GM12878 (cell line): ENCODE measurements at regions of chr2 and their contacts with region 1.

Region 1: GRCh38 chr2:214809751-214810564 is 475 bp upstream of the BARD1 start:
- DNase-seq: peak; percentile 87
- ATAC-seq: peak; percentile 88
- H3K4me3 ChIP-seq: peak overlapping the region; percentile 81
- H3K27ac ChIP-seq: peak overlapping the region; percentile 72
- H3K4me1 ChIP-seq: 0 out of 2 replicates have a peak, but pooled peaks cover 5% of the 10 kb centered on the region
- H3K27me3 ChIP-seq: no peaks in the 10 kb centered on the region
- CTCF ChIP-seq: no peak
- EP300 ChIP-seq: no peak
- POLR2A ChIP-seq: peak; percentile 76
- RAD21 ChIP-seq: no peak

Region 2: DNA sequence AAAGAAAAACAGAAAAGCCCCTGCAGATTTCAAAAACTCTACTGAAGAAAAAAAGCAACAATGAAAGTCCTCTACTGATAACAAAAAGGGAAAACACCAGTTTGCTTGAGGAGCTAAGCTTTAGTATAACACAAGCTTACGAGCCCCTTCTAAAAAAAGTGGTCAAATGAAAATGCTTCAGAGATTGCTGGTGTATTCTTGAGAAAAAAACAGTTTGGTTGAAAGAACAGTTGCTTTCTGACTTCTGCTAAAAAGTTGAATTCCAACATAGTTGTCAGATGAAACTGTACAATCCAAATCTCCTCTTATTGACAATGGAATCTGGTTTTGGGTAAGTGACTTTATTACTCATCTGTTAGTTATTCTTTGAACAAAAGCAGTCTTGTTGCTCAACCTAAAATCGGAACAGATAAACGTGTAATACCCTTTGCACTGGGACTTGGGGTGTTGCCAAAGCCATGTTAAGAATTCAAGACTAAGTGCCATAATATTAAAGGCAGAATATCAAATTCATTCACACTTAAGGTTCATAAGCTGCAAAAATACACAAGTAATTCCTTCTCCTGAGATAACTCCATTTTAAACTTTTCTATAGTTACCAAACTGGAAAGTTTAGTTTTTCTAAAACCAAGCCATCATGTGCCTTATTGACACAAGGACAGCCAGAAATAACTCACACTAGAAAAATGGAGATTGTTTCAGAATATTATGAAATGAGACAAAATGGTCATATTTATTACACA is 1571.0 kb before region 1 on chr2:
- CTCF ChIA-PET with region 1: no interaction called
- POLR2A ChIA-PET with region 1: interaction called, 3 read pairs
- RAD21 ChIA-PET with region 1: interaction called, 4 read pairs
- SMC1A ChIA-PET with region 1: no interaction called
- in situ Hi-C with region 1: no loop called
- intact Hi-C with region 1: loop called (anchors 10 kb)
- DNase-seq: no peak
- ATAC-seq: peak; percentile 35
- H3K4me3 ChIP-seq: peak overlapping the region; percentile 58
- H3K27ac ChIP-seq: peak overlapping the region; percentile 98
- H3K4me1 ChIP-seq: peaks cover 47% of the 10 kb centered on the region
- H3K27me3 ChIP-seq: no peaks in the 10 kb centered on the region
- CTCF ChIP-seq: no peak
- EP300 ChIP-seq: peak; percentile 8 to 53; a peak in 1 of 4 replicates
- POLR2A ChIP-seq: no peak
- RAD21 ChIP-seq: no peak

Region 3: GRCh38 chr2:214730800-214731407 is 79.1 kb before region 1 on chr2:
- CTCF ChIA-PET with region 1: no interaction called
- POLR2A ChIA-PET with region 1: interaction called, 22 read pairs
- RAD21 ChIA-PET with region 1: interaction called, 59 read pairs
- SMC1A ChIA-PET with region 1: interaction called, 11 read pairs
- in situ Hi-C with region 1: no loop called
- intact Hi-C with region 1: loop called (anchors 2 kb)
- DNase-seq: peak; percentile 45
- ATAC-seq: peak; percentile 89
- H3K4me3 ChIP-seq: no peak overlapping the region
- H3K27ac ChIP-seq: no peak overlapping the region
- H3K4me1 ChIP-seq: no peaks in the 10 kb centered on the region
- H3K27me3 ChIP-seq: no peaks in the 10 kb centered on the region
- CTCF ChIP-seq: no peak
- EP300 ChIP-seq: no peak
- POLR2A ChIP-seq: no peak
- RAD21 ChIP-seq: no peak

Region 4: GRCh38 chr2:214747992-214748391 is 62.0 kb before region 1 on chr2:
- CTCF ChIA-PET with region 1: interaction called, 3 read pairs
- POLR2A ChIA-PET with region 1: interaction called, 18 read pairs
- RAD21 ChIA-PET with region 1: interaction called, 16 read pairs
- SMC1A ChIA-PET with region 1: interaction called, 41 read pairs
- in situ Hi-C with region 1: no loop called
- intact Hi-C with region 1: loop called (anchors 1 kb)
- DNase-seq: peak; percentile 40
- ATAC-seq: peak; percentile 78
- H3K4me3 ChIP-seq: no peak overlapping the region
- H3K27ac ChIP-seq: no peak overlapping the region
- H3K4me1 ChIP-seq: no peaks in the 10 kb centered on the region
- H3K27me3 ChIP-seq: no peaks in the 10 kb centered on the region
- CTCF ChIP-seq: no peak
- EP300 ChIP-seq: peak in 1 of 2 experiments; percentile 47; a peak in 1 of 4 replicates
- POLR2A ChIP-seq: no peak
- RAD21 ChIP-seq: no peak

Region 5: DNA sequence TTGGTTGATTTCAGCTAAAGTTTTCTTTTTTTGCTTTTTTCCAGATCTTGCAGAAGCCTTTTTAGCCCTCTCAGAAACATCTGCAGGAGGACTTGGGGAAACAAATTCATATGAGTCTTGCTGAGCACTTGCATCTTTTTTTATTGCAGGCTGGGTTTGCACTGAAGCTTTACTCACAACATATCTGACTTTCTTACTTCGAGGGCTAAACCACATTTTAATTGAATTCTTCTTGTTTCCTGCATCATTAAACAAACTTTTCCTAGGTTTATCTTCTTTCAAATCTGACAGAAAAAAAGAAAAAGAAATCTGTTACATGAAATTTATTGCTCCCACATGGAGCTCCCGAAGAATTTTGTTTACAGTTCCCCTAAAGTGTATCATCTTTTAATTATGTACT is 28.7 kb before region 1 on chr2:
- CTCF ChIA-PET with region 1: interaction called, 3 read pairs
- POLR2A ChIA-PET with region 1: interaction called, 4 read pairs
- RAD21 ChIA-PET with region 1: no interaction called
- SMC1A ChIA-PET with region 1: interaction called, 11 read pairs
- in situ Hi-C with region 1: no loop called
- intact Hi-C with region 1: no loop called
- DNase-seq: no peak
- ATAC-seq: no peak
- H3K4me3 ChIP-seq: no peak overlapping the region
- H3K27ac ChIP-seq: no peak overlapping the region
- H3K4me1 ChIP-seq: no peaks in the 10 kb centered on the region
- H3K27me3 ChIP-seq: no peaks in the 10 kb centered on the region
- CTCF ChIP-seq: no peak
- EP300 ChIP-seq: no peak
- POLR2A ChIP-seq: no peak
- RAD21 ChIP-seq: no peak

Region 6: DNA sequence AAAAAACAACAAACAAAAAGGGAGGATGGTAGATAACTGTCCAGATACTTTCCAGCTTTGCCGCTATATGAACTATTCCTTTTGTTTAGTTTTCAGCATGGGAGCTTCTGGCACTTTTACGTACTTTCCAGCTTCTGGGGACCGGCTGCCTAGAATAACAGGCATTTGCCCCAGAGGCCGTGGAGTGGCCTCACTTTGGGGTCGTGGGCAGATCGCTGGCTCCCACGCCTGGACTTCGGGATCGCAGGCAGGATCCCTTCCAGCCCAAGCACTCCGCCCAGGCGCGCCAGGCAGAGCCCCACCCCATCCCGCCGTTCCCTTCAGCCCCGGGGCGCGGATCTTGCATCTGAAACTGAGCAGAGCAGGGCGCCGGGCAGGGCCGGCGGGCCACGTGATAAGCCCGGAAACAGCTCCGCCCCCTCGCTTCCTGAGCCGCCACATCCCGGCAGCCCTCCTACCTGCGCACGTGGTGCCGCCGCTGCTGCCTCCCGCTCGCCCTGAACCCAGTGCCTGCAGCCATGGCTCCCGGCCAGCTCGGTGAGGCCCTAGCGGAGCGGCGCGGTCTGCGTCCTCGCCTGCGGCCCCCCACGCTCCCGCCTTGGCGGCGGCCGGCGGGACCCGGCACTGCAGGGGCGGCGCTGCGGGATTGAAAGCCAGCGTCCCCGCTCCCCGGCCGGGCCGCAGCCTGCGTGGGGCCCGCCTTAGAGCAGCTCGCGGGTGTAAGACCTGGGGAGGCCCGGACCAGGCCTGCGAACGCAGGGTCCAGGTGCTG is 501.9 kb after region 1 on chr2 and contains the start of gene ATIC:
- CTCF ChIA-PET with region 1: no interaction called
- POLR2A ChIA-PET with region 1: no interaction called
- RAD21 ChIA-PET with region 1: no interaction called
- SMC1A ChIA-PET with region 1: interaction called, 3 read pairs
- in situ Hi-C with region 1: no loop called
- intact Hi-C with region 1: loop called (anchors 5 kb)
- DNase-seq: peak; percentile 70
- ATAC-seq: peak; percentile 97
- H3K4me3 ChIP-seq: peak within 1 kb of the TSS; percentile 86
- H3K27ac ChIP-seq: peak within 1 kb of the TSS; percentile 97
- H3K4me1 ChIP-seq: no peaks in the 10 kb centered on the region; the same call in 1 of the 2 replicates
- H3K27me3 ChIP-seq: no peaks in the 10 kb centered on the region
- CTCF ChIP-seq: 0 out of 6 replicates have a peak, but pooled peaks of 1 of the 3 experiments have one; percentile 1
- EP300 ChIP-seq: no peak
- POLR2A ChIP-seq: peak; percentile 98
- RAD21 ChIP-seq: no peak
- polyA plus RNA-seq, gene ATIC: 313 to 518 TPM